ENCODE measurements at regions of chr4 and their contacts with region 1.

Region 1: GRCh38 chr4:74109116-74109869 is 10.3 kb upstream of the CXCL2 start:
- DNase-seq: peak; percentile 81
- ATAC-seq: peak; percentile 96
- H3K4me3 ChIP-seq: peak overlapping the region in 1 of 2 experiments; percentile 37; a peak in 2 of 4 replicates
- H3K27ac ChIP-seq: peak overlapping the region; percentile 54
- H3K4me1 ChIP-seq: peaks cover 18 to 48% of the 10 kb centered on the region in 2 experiments
- H3K27me3 ChIP-seq: no peaks in the 10 kb centered on the region
- CTCF ChIP-seq: no peak
- POLR2A ChIP-seq: no peak
- RAD21 ChIP-seq: 0 out of 2 replicates have a peak, but pooled peaks have one; percentile 4

Region 2: DNA sequence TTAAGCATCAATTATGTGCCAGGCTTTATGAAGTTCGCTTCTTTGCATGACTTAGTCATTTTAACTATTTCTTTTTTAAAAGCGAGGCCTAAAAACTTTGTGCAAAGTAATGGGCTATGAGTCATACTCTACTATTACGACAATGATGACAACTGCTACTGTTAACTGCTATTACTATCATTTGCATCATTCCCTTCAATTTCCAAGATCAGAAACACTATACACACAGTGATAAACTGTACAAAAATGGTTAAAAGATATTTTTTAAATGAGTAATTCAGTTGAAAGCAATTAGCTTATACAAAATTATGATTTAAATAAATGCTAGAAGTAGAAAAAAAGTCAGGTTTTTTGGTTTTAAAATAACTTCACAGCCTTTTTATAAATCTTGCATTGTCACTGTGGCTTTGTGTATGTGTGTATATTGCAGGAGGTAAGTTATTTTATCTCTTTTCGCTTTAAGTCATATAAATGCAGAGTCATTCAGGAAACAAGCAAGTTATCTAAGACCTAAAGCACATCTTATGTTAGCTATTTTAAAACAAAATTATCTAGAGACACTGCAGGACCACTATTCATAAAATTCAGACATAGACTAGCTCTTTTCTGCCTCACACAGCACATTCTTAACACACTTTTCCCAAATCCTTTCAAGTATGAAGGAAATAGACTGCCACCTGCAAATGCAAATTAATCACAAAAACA is 52.3 kb before region 1 on chr4:
- CTCF ChIA-PET with region 1: interaction called, 7 read pairs
- POLR2A ChIA-PET with region 1: interaction called, 6 read pairs
- RAD21 ChIA-PET with region 1: no interaction called
- intact Hi-C with region 1: loop called (anchors 2 kb)
- DNase-seq: peak; percentile 68
- ATAC-seq: peak; percentile 63; the same call in 1 of the 2 replicates
- H3K4me3 ChIP-seq: no peak overlapping the region
- H3K27ac ChIP-seq: peak overlapping the region; percentile 19; the same call in 1 of the 2 replicates
- H3K4me1 ChIP-seq: peaks cover 8 to 15% of the 10 kb centered on the region in 2 experiments
- H3K27me3 ChIP-seq: no peaks in the 10 kb centered on the region
- CTCF ChIP-seq: no peak
- POLR2A ChIP-seq: no peak
- RAD21 ChIP-seq: no peak